Left cardiac atrium (tissue), 4 donors: ENCODE measurements at regions of chr11 and their contacts with region 1.

Region 1: DNA sequence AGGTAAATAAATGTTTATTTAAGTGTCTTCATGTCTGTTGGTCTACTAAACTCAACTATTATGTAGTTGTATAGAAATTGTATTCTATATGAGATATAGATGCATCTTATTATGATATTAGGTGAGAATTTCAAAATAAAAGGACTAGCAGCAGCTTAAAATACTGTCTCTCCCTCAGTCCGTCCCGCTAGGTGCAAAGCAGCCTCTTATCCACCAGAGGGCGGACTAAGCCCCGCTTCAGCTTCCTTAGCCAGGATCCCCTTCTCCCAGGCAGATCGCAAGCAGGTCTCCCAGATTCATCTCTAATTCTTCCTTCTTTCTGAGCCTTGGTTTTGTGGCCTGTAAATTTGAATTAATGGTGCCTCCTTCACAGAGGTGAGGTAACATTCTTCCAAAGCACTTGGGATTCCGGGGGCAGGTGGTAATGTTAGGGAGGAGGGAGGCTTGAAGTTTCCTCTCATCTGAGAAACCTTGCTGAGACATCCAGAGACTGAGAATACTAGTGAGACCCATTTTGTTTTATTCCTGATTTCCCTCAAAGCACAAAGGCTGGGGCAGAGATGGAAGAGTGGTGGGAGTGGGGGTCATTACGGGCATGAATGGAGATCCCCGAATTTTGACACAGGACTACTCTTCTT is 13.5 kb upstream of the INSC start:
- DNase-seq: peak; percentile 52
- ATAC-seq: peak; percentile 76 to 86

Region 2: DNA sequence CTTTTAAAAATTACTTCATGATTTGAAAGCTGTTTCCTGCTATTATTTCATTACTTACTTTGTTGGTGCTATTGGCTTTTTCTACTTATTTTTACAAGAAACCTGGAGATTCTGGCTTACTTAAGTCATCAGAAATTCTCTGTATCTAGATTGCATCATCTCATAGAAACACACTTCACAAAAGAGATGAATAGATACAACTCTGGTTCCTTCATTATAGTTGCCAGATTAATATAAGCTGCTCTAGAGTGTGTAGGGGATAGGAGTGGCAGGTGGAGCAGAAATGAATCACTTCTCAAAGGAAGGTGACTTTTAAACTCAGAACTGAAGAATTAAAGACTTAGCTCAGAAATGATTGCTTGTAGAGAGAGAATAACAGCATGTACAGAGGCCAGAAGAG is 229.2 kb before region 1 on chr11:
- intact Hi-C with region 1: no loop called
- DNase-seq: no peak
- ATAC-seq: no peak

Region 3: DNA sequence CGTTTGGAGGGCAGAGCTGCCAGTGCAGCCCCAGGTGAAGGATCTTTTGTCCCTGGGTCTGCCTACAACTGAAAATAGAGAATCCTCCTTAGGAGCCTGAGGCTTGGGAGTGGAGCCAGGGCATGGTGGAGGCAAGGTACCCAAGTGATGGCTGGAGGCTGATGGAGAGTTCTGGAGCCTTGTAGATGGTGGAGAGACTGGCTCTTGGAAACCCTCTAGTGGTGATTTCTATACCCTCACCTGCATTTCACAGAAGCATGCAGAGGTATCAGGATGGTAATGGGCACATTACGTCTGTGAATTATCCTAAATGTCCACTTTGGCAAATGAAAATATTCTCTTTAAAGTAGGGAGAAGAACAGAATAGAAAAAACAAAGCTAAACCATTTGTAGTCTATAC is 57.9 kb after region 1 on chr11:
- intact Hi-C with region 1: no loop called
- DNase-seq: no peak
- ATAC-seq: no peak

Region 4: DNA sequence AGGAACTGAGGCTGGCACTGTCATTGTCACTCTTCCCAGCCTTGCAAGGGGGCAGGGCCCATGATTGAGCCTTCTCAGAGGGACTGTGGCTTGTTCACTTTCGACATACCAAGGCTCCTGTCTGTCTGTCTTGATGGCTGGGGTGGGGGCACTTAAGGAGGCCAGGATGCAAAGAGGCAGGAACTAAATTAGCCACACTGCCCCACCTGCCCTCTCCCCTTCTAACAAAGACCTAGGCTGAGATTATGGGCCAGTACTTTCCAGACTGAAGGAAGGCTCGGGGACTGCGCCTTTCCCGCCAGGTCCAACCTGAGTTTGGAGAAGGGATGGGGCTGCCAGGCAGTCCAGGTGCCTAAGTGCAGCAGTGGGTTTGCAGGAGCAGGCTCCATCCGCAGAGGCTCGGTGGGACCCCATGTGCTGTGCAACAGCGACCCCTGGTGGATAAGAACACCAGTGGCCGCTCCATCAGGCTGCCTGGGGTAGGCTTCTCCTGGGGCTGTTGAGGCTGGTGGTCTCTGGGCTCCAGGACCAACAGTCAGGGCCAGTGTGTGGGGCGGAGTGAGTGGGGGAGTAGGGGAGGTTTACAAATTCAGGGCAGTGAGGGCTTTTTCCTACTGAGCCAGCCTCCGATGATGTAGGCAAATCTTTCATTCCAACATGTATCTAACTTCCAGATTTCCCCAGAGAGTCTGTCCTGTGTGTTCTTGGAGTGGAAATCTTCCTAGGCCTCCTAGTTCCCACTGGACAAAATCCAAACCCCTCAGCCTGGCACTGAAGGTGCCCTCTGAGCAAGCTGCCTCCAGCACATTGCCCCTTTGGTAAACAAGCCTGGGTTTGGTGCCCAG is 107.4 kb after region 1 on chr11:
- intact Hi-C with region 1: loop called (anchors 1 to 5 kb)
- DNase-seq: peak; percentile 70
- ATAC-seq: peak; percentile 90 to 93

Region 5: GRCh38 chr11:15288863-15289262 is 187.7 kb after region 1 on chr11:
- intact Hi-C with region 1: no loop called
- DNase-seq: no peak
- ATAC-seq: no peak